ENCODE measurements at regions of chr1 and their contacts with region 1.

Region 1: GRCh38 chr1:9428601-9429341 is 110.5 kb upstream of the SLC25A33 start:
- DNase-seq: peak; percentile 100
- ATAC-seq: peak; percentile 89
- H3K4me3 ChIP-seq: peak overlapping the region; percentile 64
- H3K27ac ChIP-seq: peak overlapping the region; percentile 43
- H3K4me1 ChIP-seq: peaks cover 36% of the 10 kb centered on the region
- H3K27me3 ChIP-seq: no peaks in the 10 kb centered on the region
- CTCF ChIP-seq: peak in 1 of 3 experiments; percentile 4; a peak in 1 of 6 replicates
- EP300 ChIP-seq: no peak
- POLR2A ChIP-seq: peak; percentile 77
- RAD21 ChIP-seq: no peak

Region 2: GRCh38 chr1:9110669-9111356 is 318.0 kb before region 1 on chr1:
- CTCF ChIA-PET with region 1: no interaction called
- POLR2A ChIA-PET with region 1: no interaction called
- RAD21 ChIA-PET with region 1: no interaction called
- SMC1A ChIA-PET with region 1: no interaction called
- in situ Hi-C with region 1: no loop called
- intact Hi-C with region 1: no loop called
- DNase-seq: no peak
- ATAC-seq: peak; percentile 94
- H3K4me3 ChIP-seq: no peak overlapping the region
- H3K27ac ChIP-seq: no peak overlapping the region
- H3K4me1 ChIP-seq: peaks cover 19% of the 10 kb centered on the region
- H3K27me3 ChIP-seq: no peaks in the 10 kb centered on the region
- CTCF ChIP-seq: peak; percentile 87 to 93 (median 91)
- EP300 ChIP-seq: no peak
- POLR2A ChIP-seq: no peak
- RAD21 ChIP-seq: peak; percentile 98

Region 3: GRCh38 chr1:9413148-9413876 is 15.5 kb before region 1 on chr1:
- CTCF ChIA-PET with region 1: interaction called, 30 read pairs
- POLR2A ChIA-PET with region 1: interaction called, 59 read pairs
- RAD21 ChIA-PET with region 1: interaction called, 74 read pairs
- SMC1A ChIA-PET with region 1: interaction called, 63 read pairs
- in situ Hi-C with region 1: no loop called
- intact Hi-C with region 1: loop called (anchors 1 kb)
- DNase-seq: peak; percentile 89
- ATAC-seq: peak; percentile 91
- H3K4me3 ChIP-seq: peak overlapping the region; percentile 26; the same call in 1 of the 2 replicates
- H3K27ac ChIP-seq: peak overlapping the region; percentile 90
- H3K4me1 ChIP-seq: peaks cover 56% of the 10 kb centered on the region
- H3K27me3 ChIP-seq: no peaks in the 10 kb centered on the region
- CTCF ChIP-seq: no peak
- EP300 ChIP-seq: peak; percentile 66 to 87
- POLR2A ChIP-seq: peak; percentile 59
- RAD21 ChIP-seq: 0 out of 2 replicates have a peak, but pooled peaks have one; percentile 23

Region 4: GRCh38 chr1:9558271-9558945 is 129.6 kb after region 1 on chr1:
- CTCF ChIA-PET with region 1: no interaction called
- POLR2A ChIA-PET with region 1: no interaction called
- RAD21 ChIA-PET with region 1: no interaction called
- SMC1A ChIA-PET with region 1: no interaction called
- in situ Hi-C with region 1: no loop called
- intact Hi-C with region 1: no loop called
- DNase-seq: no peak
- ATAC-seq: no peak
- H3K4me3 ChIP-seq: no peak overlapping the region
- H3K27ac ChIP-seq: no peak overlapping the region
- H3K4me1 ChIP-seq: no peaks in the 10 kb centered on the region
- H3K27me3 ChIP-seq: no peaks in the 10 kb centered on the region
- CTCF ChIP-seq: no peak
- EP300 ChIP-seq: no peak
- POLR2A ChIP-seq: no peak
- RAD21 ChIP-seq: no peak

Measured in GM12878 (cell line).